ENCODE measurements at regions of chr19 and their contacts with region 1.

Region 1: DNA sequence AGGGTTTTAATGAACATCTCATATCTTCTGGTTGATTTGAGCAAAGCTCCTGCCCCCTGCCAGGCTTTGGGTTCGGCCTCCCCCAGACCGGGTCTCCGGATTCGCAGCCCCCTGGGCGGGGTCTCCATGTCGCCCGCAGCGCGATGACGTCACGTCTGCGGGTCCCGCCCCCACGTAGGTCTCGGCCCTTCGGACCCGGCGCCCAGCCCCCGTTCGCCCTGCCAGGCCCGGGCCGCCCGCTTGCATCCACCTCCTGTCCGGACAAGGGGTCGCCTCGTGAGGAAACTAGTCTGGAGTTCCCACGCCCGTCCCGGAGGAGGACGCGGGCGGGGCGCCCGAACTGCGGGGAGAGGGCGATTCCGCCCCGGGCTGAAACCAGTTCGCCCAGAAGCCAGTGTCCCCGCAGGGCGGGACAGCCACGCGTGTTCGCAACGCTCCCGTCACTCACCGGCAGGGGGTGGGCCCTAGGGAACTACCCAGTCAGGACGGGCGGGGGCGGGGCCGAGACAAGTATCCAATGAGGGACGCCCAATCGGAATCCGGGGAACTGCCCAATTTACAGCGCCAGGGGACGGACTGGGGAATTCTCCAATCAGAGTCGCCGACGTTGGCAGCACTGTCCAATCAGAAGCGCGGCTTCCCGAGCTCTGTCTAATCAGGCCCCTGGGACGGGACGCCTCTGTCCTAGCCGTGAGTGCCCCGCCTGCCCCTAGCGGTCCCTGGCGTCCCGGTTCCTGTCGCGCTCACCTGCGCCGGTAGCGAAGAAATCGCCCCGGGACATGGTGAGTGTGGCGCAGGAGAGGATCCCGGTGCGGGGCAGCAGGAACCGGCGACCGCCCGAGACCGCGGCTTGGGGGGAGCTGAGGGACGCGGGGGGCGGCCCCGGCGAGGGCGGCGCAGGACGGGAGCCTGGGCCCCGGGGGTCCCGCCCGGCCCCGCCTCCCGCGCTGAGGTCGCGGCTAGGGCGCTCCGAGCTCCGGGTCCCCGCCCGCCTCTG is at the start of gene ZNF555:
- DNase-seq: peak; percentile 98
- ATAC-seq: peak; percentile 97
- H3K4me3 ChIP-seq: peak within 1 kb of the TSS; percentile 83 to 93 (median 92)
- H3K27ac ChIP-seq: peak within 1 kb of the TSS; percentile 93
- H3K4me1 ChIP-seq: peaks cover 69% of the 10 kb centered on the region
- H3K27me3 ChIP-seq: no peaks in the 10 kb centered on the region
- CTCF ChIP-seq: peak; percentile 66
- EP300 ChIP-seq: no peak
- POLR2A ChIP-seq: peak; percentile 45 to 62; a peak in 3 of 4 replicates
- RAD21 ChIP-seq: peak; percentile 61
- total RNA-seq, gene ZNF555: 8.0 and 12.4 TPM in 2 replicates

Region 2: GRCh38 chr19:2663920-2664571 is 177.0 kb before region 1 on chr19:
- CTCF ChIA-PET with region 1: no interaction called
- POLR2A ChIA-PET with region 1: no interaction called
- in situ Hi-C with region 1: no loop called
- intact Hi-C with region 1: no loop called
- DNase-seq: no peak
- ATAC-seq: peak; percentile 60
- H3K4me3 ChIP-seq: peak overlapping the region in 1 of 3 experiments; percentile 2; a peak in 1 of 6 replicates
- H3K27ac ChIP-seq: no peak overlapping the region
- H3K4me1 ChIP-seq: peaks cover 13% of the 10 kb centered on the region; the same call in 1 of the 2 replicates
- H3K27me3 ChIP-seq: no peaks in the 10 kb centered on the region
- CTCF ChIP-seq: peak; percentile 51
- EP300 ChIP-seq: no peak
- POLR2A ChIP-seq: no peak
- RAD21 ChIP-seq: peak; percentile 51

Region 3: GRCh38 chr19:2798733-2799132 is 42.4 kb before region 1 on chr19:
- CTCF ChIA-PET with region 1: no interaction called
- POLR2A ChIA-PET with region 1: no interaction called
- in situ Hi-C with region 1: no loop called
- intact Hi-C with region 1: no loop called
- DNase-seq: no peak
- ATAC-seq: no peak
- H3K4me3 ChIP-seq: no peak overlapping the region
- H3K27ac ChIP-seq: no peak overlapping the region
- H3K4me1 ChIP-seq: no peaks in the 10 kb centered on the region
- H3K27me3 ChIP-seq: no peaks in the 10 kb centered on the region
- CTCF ChIP-seq: no peak
- EP300 ChIP-seq: no peak
- POLR2A ChIP-seq: no peak
- RAD21 ChIP-seq: no peak

Region 4: DNA sequence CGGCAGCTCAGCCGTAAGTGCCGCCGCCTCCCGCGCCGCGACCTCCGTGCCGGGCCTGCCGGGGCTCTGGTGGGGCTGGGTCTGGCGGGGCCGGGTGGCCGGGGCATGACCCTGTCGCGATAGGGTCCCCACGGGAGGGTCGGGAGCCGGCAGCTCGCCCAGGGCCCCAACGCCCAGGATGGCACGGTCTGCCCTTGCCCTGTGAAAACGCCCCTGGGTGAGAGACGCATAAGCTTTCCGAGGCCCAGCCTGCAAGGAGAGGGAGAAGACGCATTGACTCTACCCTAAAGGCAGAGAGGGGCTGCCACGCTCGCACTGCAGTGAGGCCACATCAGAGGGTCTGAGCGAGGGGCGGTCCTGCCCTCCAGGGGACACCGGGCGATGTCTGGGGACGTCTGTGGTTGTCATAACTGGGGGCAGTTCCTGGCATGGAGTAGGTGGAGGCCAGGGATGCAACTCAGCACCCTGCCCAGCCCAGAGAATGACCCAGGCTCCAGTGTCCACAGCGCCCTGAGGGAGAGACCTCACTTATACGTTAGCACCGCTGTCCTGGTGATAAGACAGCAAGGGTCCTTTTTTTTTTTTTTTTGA is 20.9 kb before region 1 on chr19:
- CTCF ChIA-PET with region 1: interaction called, 4 read pairs
- POLR2A ChIA-PET with region 1: interaction called, 11 read pairs
- in situ Hi-C with region 1: no loop called
- intact Hi-C with region 1: loop called (anchors 2 kb)
- DNase-seq: no peak
- ATAC-seq: peak; percentile 68
- H3K4me3 ChIP-seq: peak overlapping the region; percentile 60 to 84 (median 81)
- H3K27ac ChIP-seq: peak overlapping the region; percentile 21
- H3K4me1 ChIP-seq: no peaks in the 10 kb centered on the region; the same call in 1 of the 2 replicates
- H3K27me3 ChIP-seq: no peaks in the 10 kb centered on the region
- CTCF ChIP-seq: no peak
- EP300 ChIP-seq: no peak
- POLR2A ChIP-seq: peak in 1 of 2 experiments; percentile 0; a peak in 1 of 4 replicates
- RAD21 ChIP-seq: no peak